ENCODE measurements at regions of chr6 and their contacts with region 1.

Region 1: DNA sequence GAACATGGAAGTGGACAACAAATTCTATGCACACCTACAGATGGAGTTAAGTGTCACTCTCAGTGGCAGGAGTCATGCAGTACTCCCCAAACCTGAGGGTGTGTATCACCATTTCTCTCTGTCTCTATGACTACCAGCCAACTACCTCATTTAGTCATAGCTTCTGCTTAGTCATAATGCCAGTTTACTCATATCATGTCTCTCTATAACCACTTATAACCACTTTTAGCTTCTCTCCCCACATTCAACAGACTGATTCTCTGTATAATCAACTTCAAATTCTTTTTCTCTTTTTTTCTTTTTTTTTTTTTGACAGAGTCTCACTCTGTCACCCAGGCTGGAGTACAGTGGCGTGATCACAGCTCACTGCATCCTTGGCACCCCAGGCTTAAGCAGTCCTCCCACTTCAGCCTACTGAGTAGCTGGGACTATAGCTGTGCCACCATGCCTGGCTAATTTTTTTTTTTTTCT is 13.8 kb upstream of the GTF3C6 start:
- DNase-seq: no peak
- H3K4me3 ChIP-seq: no peak overlapping the region
- H3K27ac ChIP-seq: no peak overlapping the region
- H3K4me1 ChIP-seq: peaks cover 0 to 6% (median 4%) of the 10 kb centered on the region in 6 donors
- H3K27me3 ChIP-seq: no peaks in the 10 kb centered on the region
- CTCF ChIP-seq: no peak
- POLR2A ChIP-seq: no peak

Region 2: GRCh38 chr6:110528101-110528929 is 416.4 kb before region 1 on chr6:
- intact Hi-C with region 1: loop called (anchors 5 kb)
- DNase-seq: no peak
- H3K4me3 ChIP-seq: no peak overlapping the region
- H3K27ac ChIP-seq: peak overlapping the region in 4 of 8 donors; percentile 14 to 32 (median 24)
- H3K4me1 ChIP-seq: peaks cover 0 to 21% (median 7%) of the 10 kb centered on the region in 6 donors
- H3K27me3 ChIP-seq: no peaks in the 10 kb centered on the region
- CTCF ChIP-seq: peak; percentile 61 to 81 (median 73)
- POLR2A ChIP-seq: no peak

Region 3: GRCh38 chr6:110682460-110682853 is 262.3 kb before region 1 on chr6:
- intact Hi-C with region 1: loop called (anchors 5 kb)
- DNase-seq: no peak
- H3K4me3 ChIP-seq: no peak overlapping the region
- H3K27ac ChIP-seq: peak overlapping the region in 3 of 8 donors; percentile 13 to 54 (median 27)
- H3K4me1 ChIP-seq: peaks cover 7 to 36% (median 22%) of the 10 kb centered on the region in 6 donors
- H3K27me3 ChIP-seq: no peaks in the 10 kb centered on the region
- CTCF ChIP-seq: peak; percentile 44 to 84 (median 69)
- POLR2A ChIP-seq: no peak